T-cell (primary cell): ENCODE measurements at regions of chr6 and their contacts with region 1.

Region 1: DNA sequence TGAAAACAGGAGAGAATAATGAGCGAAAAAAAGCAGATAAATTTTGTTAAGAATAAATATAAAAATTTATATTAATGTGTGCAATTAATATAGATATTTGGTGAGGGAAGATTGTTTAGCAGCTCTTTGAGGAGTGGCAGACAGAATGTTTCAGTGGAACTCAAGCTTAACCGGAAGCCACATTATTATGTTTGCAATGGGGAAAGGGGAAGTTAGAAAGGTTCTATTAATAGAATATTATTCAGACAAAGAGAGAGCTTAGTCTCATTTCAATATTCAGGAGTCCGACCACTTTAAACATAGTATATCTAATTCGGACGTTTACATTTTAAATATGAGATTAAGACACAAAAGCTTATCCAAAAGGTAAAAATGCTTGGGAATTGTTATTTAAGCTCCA is 81.6 kb upstream of the KHDRBS2 start:
- DNase-seq: no peak
- ATAC-seq: no peak
- H3K4me3 ChIP-seq: no peak overlapping the region
- H3K4me3 Mint-ChIP-seq: no peak overlapping the region
- H3K27ac ChIP-seq: no peak overlapping the region
- H3K27ac Mint-ChIP-seq: no peak overlapping the region
- H3K4me1 ChIP-seq: no peaks in the 10 kb centered on the region
- H3K4me1 Mint-ChIP-seq: no peaks in the 10 kb centered on the region
- H3K27me3 ChIP-seq: no peaks in the 10 kb centered on the region
- H3K27me3 Mint-ChIP-seq: no peaks in the 10 kb centered on the region

Region 2: DNA sequence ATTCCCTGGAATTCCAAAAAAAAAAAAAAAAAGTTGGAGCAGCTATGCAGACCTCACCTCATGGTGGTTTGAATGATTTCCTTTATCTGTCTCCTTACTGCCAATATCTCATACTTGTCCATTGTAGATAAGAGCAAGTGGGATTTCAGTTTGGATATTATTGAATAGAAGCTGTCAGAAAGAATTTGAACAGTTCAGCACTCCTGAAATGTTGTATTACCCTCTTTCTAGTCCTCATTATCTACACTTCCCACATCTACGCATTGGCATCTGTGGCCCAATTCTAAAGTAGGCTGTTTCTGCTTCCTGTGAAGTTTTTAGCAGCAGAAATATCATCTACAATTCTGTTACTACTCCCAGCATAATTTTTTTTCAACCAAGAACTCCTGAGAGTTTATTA is 13.3 kb before region 1 on chr6:
- CTCF ChIA-PET with region 1: no interaction called
- POLR2A ChIA-PET with region 1: interaction called in 1 of 2 experiments, 11 read pairs
- DNase-seq: no peak
- ATAC-seq: no peak
- H3K4me3 ChIP-seq: no peak overlapping the region
- H3K4me3 Mint-ChIP-seq: no peak overlapping the region
- H3K27ac ChIP-seq: no peak overlapping the region
- H3K27ac Mint-ChIP-seq: no peak overlapping the region
- H3K4me1 ChIP-seq: no peaks in the 10 kb centered on the region
- H3K4me1 Mint-ChIP-seq: no peaks in the 10 kb centered on the region
- H3K27me3 ChIP-seq: no peaks in the 10 kb centered on the region
- H3K27me3 Mint-ChIP-seq: no peaks in the 10 kb centered on the region